ENCODE measurements at regions of chr16 and their contacts with region 1.

Region 1: GRCh38 chr16:62933929-62934328 is 897.7 kb upstream of the CDH8 start:
- DNase-seq: no peak
- H3K4me3 ChIP-seq: no peak overlapping the region
- H3K27ac ChIP-seq: no peak overlapping the region
- H3K4me1 ChIP-seq: no peaks in the 10 kb centered on the region
- H3K27me3 ChIP-seq: no peaks in the 10 kb centered on the region
- CTCF ChIP-seq: no peak
- EP300 ChIP-seq: no peak
- POLR2A ChIP-seq: no peak

Region 2: DNA sequence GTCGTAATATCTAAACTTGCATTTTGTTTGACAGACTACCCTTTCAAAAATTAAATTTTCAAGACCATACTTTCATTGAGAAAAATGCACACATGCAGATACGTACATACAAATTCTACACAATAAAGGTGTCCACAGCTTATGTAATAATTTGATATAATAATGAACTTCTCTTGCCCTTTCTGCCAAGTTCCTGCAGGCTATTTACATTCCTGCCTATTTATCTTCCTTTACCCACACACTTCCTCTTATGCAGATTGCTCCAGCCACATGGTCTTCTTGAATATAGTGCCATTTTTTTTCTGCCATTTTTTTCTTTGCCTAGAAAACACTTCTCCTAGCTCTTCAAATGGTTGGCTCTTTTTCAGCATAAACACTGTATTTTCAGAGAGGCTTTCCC is 70.8 kb before region 1 on chr16:
- in situ Hi-C with region 1: no loop called
- intact Hi-C with region 1: no loop called
- DNase-seq: no peak
- H3K4me3 ChIP-seq: no peak overlapping the region
- H3K27ac ChIP-seq: no peak overlapping the region
- H3K4me1 ChIP-seq: no peaks in the 10 kb centered on the region
- H3K27me3 ChIP-seq: no peaks in the 10 kb centered on the region
- CTCF ChIP-seq: no peak
- EP300 ChIP-seq: no peak
- POLR2A ChIP-seq: no peak

Region 3: DNA sequence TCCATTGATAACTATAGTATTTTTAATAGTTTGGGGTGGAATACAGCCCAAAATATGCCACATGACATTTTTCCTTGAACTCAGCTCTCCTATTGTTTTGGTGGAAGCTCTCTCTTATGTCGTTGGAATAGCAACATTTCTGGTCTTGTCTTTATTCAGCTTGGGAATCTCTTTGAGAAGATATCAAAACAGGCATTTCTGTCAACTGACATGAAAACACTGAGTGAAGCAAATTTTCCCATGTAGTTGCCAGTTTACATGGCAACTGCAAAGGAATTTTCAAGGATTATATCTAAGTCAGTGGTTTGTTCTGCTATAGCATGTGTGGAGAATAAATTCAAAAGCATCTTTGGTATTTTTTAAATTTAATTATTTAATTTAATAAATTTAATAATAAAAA is 34.2 kb before region 1 on chr16:
- in situ Hi-C with region 1: no loop called
- intact Hi-C with region 1: loop called (anchors 2 kb)
- DNase-seq: no peak
- H3K4me3 ChIP-seq: no peak overlapping the region
- H3K27ac ChIP-seq: no peak overlapping the region
- H3K4me1 ChIP-seq: no peaks in the 10 kb centered on the region
- H3K27me3 ChIP-seq: no peaks in the 10 kb centered on the region
- CTCF ChIP-seq: no peak
- EP300 ChIP-seq: no peak
- POLR2A ChIP-seq: no peak